ENCODE measurements at regions of chr13 and their contacts with region 1.

Region 1: DNA sequence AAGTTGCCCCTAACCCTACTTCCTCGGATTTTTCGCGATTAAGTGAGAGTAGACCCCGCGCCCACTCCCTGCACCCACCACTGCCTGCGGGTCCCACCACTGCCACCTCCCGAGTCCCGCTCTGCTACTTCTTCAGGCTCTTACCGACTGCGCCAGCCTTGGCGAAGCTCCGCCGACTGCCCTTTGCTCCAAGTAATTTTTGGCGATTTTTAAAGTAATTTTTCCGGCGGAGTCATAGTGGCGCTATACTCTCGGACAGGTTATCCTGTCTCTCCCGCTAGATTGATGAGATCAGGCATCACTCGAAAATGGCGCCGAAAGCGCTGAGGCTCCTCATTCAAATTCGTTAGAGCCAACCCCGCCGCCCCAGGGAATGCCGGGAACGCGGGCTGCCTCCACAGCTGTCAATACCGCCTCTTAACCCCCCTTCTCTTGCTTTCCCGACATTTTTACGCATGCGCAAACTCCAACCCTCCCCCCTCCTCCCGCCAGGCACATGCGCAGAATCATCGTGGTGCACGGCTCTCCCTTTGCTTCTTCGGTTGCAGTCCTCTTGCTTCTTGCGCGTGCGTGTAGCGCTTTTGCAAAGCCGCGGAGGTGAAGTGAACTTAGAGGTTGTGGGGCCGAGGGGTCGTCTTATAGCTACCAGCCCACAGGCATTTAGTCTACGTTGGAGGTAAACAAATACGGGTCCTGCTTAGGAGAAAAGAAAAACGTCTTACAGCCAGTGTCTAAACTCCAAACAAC is 66.6 kb downstream of the KCNRG start:
- DNase-seq: peak; percentile 99
- ATAC-seq: peak; percentile 95
- H3K4me3 ChIP-seq: peak overlapping the region; percentile 67 to 90
- H3K27ac ChIP-seq: peak overlapping the region; percentile 62 to 75
- H3K4me1 ChIP-seq: peaks cover 0 to 1% of the 10 kb centered on the region in 2 donors
- H3K27me3 ChIP-seq: no peaks in the 10 kb centered on the region

Region 2: GRCh38 chr13:50060718-50061117 is 21.1 kb before region 1 on chr13:
- intact Hi-C with region 1: no loop called
- DNase-seq: no peak
- ATAC-seq: no peak
- H3K4me3 ChIP-seq: no peak overlapping the region
- H3K27ac ChIP-seq: no peak overlapping the region
- H3K4me1 ChIP-seq: no peaks in the 10 kb centered on the region
- H3K27me3 ChIP-seq: no peaks in the 10 kb centered on the region

Region 3: GRCh38 chr13:50123862-50124536 is 42.1 kb after region 1 on chr13:
- intact Hi-C with region 1: loop called (anchors 2 kb)
- DNase-seq: peak; percentile 93 to 99
- ATAC-seq: peak; percentile 92
- H3K4me3 ChIP-seq: peak overlapping the region; percentile 48 to 65
- H3K27ac ChIP-seq: peak overlapping the region; percentile 94 to 99
- H3K4me1 ChIP-seq: no peaks in the 10 kb centered on the region
- H3K27me3 ChIP-seq: no peaks in the 10 kb centered on the region

Region 4: GRCh38 chr13:50521831-50522149 is 439.9 kb after region 1 on chr13:
- intact Hi-C with region 1: loop called in 1 of 2 experiments (anchors 5 kb)
- DNase-seq: no peak
- ATAC-seq: no peak
- H3K4me3 ChIP-seq: no peak overlapping the region
- H3K27ac ChIP-seq: no peak overlapping the region
- H3K4me1 ChIP-seq: no peaks in the 10 kb centered on the region
- H3K27me3 ChIP-seq: no peaks in the 10 kb centered on the region

Region 5: GRCh38 chr13:50801087-50801931 is 719.5 kb after region 1 on chr13:
- intact Hi-C with region 1: loop called in 1 of 2 experiments (anchors 5 kb)
- DNase-seq: peak in 1 of 2 donors; percentile 55
- ATAC-seq: peak; percentile 92
- H3K4me3 ChIP-seq: no peak overlapping the region
- H3K27ac ChIP-seq: no peak overlapping the region
- H3K4me1 ChIP-seq: peaks cover 0 to 3% of the 10 kb centered on the region in 2 donors
- H3K27me3 ChIP-seq: no peaks in the 10 kb centered on the region

Measured in aorta (tissue), 5 donors.